Heart left ventricle (tissue), 16 donors: ENCODE measurements at regions of chr11 and their contacts with region 1.

Region 1: DNA sequence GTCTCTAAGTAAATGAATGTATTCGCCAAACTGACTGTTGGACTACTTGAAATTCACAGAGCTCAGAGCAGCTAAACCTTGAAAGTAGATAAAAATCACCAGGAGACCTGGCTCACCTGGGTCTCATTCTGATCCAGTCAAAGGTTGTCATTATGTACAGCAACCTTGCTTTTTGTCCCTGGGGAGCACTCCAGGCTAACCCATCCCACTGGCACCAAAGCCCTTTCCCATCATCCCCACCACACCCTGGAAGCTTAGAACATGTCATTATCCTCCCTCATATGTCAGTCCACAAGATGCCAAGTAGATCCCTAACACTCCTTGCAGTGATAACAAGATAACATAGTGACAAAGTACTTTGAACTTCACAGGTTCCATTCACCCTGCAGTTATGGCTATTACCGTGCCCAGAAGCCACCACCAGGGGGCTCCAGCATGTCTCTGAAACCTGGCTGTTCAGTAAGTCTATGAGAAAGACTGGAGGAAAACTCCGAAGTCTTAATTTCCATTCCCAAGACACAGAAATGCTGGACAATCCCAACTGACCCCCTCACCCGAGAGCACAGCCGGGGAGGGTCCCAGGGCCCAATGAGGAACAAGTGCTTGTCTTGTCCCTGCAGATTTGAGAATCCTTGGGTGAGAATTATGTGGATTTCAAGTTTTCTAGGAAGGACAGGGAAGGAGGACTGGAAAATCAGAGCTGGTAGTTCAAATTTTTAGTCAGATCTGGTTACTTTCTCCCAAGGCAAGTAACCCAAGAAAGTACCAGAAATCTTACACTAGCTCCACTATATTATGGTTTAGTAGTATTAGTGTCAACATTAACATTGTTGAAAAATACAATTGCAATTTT is 43.0 kb upstream of the USP47 start:
- DNase-seq: peak; percentile 71 to 89 (median 83)
- ATAC-seq: peak; percentile 83 to 93 (median 90)
- H3K4me3 ChIP-seq: no peak overlapping the region
- H3K27ac ChIP-seq: no peak overlapping the region
- H3K4me1 ChIP-seq: peaks cover 0 to 6% (median 0%) of the 10 kb centered on the region in 12 donors
- H3K27me3 ChIP-seq: peaks cover 0 to 3% (median 0%) of the 10 kb centered on the region in 9 donors
- CTCF ChIP-seq: peak; percentile 86 to 98 (median 94)
- POLR2A ChIP-seq: no peak

Region 2: DNA sequence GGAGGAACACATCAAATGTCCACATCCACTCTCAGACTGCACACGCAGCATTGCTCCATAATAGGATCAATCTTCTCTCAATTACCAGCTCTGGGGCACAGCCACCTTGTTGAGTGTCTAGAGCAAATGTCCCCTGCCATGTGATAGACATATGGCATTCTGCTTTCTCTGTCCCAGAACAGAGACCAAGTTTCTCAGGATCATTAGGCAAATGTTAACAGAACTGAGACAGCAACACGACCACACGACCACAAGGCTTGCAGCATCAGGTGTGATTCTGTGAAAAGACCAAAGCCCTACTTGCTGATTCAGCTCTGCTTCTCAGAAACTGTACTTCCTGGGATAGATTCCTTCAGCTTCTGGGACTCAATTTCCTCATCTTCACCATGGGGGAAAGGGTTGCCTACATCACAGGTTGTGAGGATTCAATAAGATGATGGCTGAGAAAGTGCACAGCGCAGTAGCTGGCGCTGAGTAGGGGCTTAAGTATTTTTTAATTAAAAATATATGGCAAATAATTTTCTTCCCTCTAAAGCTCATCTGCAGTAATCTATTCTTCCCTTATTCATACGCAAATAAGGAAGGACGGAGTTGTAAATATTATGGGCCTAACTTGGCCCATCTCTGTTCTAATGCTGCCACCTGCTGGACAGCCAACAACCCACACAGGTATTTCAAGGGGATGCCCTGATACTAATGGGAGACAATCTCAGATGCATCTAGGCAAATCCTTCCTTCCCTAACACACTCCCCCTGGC is 11.3 kb before region 1 on chr11:
- intact Hi-C with region 1: no loop called
- DNase-seq: peak; percentile 55 to 78 (median 62)
- ATAC-seq: peak; percentile 53 to 93 (median 87)
- H3K4me3 ChIP-seq: no peak overlapping the region
- H3K27ac ChIP-seq: no peak overlapping the region
- H3K4me1 ChIP-seq: peaks cover 0 to 6% (median 0%) of the 10 kb centered on the region in 12 donors
- H3K27me3 ChIP-seq: no peaks in the 10 kb centered on the region
- CTCF ChIP-seq: peak; percentile 81 to 97 (median 87)
- POLR2A ChIP-seq: no peak

Region 3: DNA sequence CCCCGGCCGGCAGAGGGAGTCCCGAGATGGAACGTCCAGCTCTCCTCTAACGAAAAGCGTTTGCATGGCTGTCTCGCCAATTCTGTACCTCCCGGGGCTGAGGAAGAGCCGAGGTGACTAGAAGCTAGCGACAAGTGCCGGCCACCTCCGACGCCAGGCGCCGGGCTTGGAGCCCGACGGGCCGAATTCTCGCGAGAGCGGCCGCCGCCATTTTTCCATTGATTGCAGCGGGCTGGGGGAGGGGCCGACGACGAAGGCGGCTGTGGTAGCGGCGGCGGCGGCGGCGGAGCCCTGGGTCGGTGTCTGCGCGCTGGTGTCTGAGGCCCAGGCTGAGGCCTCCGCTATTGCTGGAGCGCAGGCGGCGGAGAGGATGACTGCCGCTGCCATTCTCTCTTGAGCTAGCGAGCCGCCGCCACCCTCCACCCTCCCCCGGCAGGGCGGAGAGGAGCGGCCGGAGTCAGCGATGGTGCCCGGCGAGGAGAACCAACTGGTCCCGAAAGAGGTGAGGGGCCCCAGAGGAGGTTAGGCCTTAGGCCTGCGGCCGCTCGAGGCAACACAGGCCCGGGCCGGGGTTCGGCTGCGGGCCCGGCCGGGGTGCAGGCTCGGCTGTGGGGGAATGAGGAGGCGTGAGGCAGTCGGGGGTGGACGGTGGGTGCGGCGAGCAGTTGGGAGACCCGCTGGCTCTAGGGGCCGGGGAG is 43.1 kb after region 1 on chr11 and contains the start of gene USP47:
- intact Hi-C with region 1: loop called in 6 of 10 experiments (anchors 5 kb)
- DNase-seq: peak; percentile 93 to 96 (median 95)
- ATAC-seq: peak; percentile 78 to 93 (median 92)
- H3K4me3 ChIP-seq: peak within 1 kb of the TSS; percentile 54 to 86 (median 77)
- H3K27ac ChIP-seq: peak within 1 kb of the TSS; percentile 87 to 99 (median 96)
- H3K4me1 ChIP-seq: peaks cover 0 to 51% (median 36%) of the 10 kb centered on the region in 12 donors
- H3K27me3 ChIP-seq: no peaks in the 10 kb centered on the region
- CTCF ChIP-seq: peak in 11 of 12 donors; percentile 33 to 77 (median 57)
- POLR2A ChIP-seq: peak in 1 of 2 donors; percentile 82
- total RNA-seq, gene USP47: 42.3 to 89.6 (median 54.3) TPM

Region 4: GRCh38 chr11:11848891-11849746 is 50.3 kb after region 1 on chr11:
- intact Hi-C with region 1: loop called in 6 of 10 experiments (anchors 5 kb)
- DNase-seq: peak in 4 of 5 donors; percentile 48 to 68 (median 54)
- ATAC-seq: peak; percentile 79 to 89 (median 85)
- H3K4me3 ChIP-seq: no peak overlapping the region
- H3K27ac ChIP-seq: peak overlapping the region in 11 of 12 donors; percentile 8 to 67 (median 40)
- H3K4me1 ChIP-seq: peaks cover 0 to 94% (median 83%) of the 10 kb centered on the region in 12 donors
- H3K27me3 ChIP-seq: no peaks in the 10 kb centered on the region
- CTCF ChIP-seq: peak; percentile 44 to 70 (median 60)
- POLR2A ChIP-seq: no peak

Region 5: DNA sequence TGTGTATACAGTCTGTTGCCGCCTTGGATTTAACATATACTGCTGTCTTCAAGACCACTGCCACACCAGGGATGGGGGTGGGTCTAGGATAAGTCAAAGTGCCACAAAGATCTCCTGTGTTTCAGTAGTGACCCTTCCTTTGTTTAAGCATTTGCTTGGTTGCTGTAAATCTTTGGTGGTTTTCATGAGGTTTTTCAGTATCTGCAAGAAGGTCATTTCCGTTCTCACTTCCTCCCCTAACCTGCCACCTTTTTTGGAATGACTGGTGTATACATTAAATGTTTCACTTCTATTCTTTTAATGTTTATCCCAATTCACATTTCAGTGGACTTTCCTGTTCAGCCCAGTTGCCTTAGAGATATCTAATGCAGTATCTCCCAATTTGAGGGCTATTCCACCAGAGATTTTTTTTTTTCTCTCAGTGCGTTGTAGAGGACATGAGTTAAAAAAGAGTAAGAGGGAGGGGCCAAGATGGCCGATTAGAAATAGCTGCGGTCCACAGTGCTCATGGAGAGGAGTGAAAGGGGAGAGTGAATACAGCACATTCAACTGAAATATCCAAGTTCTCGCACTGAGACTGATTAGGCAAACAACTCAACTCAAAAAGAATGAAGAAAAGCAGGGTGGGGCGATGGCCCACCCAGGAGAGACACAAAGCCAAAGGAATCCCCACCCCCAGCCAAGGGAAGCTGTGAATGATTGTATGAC is 86.1 kb after region 1 on chr11:
- intact Hi-C with region 1: loop called in 5 of 10 experiments (anchors 5 to 10 kb)
- DNase-seq: no peak
- ATAC-seq: no peak
- H3K4me3 ChIP-seq: no peak overlapping the region
- H3K27ac ChIP-seq: no peak overlapping the region
- H3K4me1 ChIP-seq: peaks cover 0 to 24% (median 16%) of the 10 kb centered on the region in 12 donors
- H3K27me3 ChIP-seq: no peaks in the 10 kb centered on the region
- CTCF ChIP-seq: no peak
- POLR2A ChIP-seq: no peak

Region 6: GRCh38 chr11:11895672-11896071 is 96.9 kb after region 1 on chr11:
- intact Hi-C with region 1: loop called in 6 of 10 experiments (anchors 5 to 10 kb)
- DNase-seq: no peak
- ATAC-seq: no peak
- H3K4me3 ChIP-seq: no peak overlapping the region
- H3K27ac ChIP-seq: no peak overlapping the region
- H3K4me1 ChIP-seq: peaks cover 0 to 7% (median 0%) of the 10 kb centered on the region in 12 donors
- H3K27me3 ChIP-seq: no peaks in the 10 kb centered on the region
- CTCF ChIP-seq: peak in 6 of 12 donors; percentile 10 to 39 (median 22)
- POLR2A ChIP-seq: no peak

Region 7: DNA sequence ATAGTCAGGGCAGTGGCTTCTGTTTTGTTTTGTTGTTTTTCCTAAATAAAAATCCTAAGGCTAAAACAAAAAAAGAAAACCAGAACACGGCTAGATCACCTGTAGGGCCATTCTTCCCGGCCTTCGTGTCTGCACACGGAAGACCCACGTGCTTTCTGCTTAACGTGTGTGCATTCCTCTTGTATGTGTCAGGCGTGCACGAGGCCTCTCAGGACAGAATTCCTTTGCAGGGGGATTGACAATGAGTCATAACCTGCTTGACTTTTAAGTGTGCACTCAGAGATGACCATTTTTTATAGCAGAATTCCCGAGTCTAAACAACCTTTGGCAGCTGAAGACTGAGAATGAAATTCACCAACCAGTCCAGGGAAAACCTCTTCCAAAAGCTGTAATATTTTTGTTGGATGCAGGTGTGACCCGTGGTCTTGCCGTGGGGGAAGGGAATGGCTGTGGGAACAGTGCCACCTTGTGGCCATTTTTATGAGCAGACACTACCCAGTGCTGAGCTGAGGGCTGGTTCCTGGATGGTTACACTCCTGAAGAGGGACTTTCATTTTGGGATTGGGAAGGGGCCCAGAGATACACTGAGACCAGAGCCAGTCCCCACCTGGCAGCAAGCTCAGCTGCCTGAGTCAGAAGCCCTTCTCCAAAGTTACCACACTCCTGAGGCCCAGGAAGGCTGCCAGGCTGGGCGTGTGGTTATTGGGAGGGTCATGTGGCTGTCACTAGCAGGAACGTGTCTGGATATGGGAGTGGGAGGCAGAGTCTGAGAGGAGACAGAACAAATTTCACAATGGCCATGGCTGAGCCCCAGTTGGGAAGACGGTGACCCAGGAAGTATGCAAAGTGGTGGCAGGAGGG is 245.4 kb after region 1 on chr11:
- intact Hi-C with region 1: loop called (anchors 1 to 5 kb)
- DNase-seq: peak; percentile 80 to 88 (median 81)
- ATAC-seq: peak; percentile 82 to 90 (median 88)
- H3K4me3 ChIP-seq: peak overlapping the region in 3 of 12 donors; percentile 3 to 12 (median 8)
- H3K27ac ChIP-seq: peak overlapping the region in 11 of 12 donors; percentile 31 to 78 (median 66)
- H3K4me1 ChIP-seq: peaks cover 0 to 23% (median 17%) of the 10 kb centered on the region in 12 donors
- H3K27me3 ChIP-seq: no peaks in the 10 kb centered on the region
- CTCF ChIP-seq: peak; percentile 89 to 98 (median 93)
- POLR2A ChIP-seq: no peak